ENCODE measurements at regions of chr11 and their contacts with region 1.

Region 1: DNA sequence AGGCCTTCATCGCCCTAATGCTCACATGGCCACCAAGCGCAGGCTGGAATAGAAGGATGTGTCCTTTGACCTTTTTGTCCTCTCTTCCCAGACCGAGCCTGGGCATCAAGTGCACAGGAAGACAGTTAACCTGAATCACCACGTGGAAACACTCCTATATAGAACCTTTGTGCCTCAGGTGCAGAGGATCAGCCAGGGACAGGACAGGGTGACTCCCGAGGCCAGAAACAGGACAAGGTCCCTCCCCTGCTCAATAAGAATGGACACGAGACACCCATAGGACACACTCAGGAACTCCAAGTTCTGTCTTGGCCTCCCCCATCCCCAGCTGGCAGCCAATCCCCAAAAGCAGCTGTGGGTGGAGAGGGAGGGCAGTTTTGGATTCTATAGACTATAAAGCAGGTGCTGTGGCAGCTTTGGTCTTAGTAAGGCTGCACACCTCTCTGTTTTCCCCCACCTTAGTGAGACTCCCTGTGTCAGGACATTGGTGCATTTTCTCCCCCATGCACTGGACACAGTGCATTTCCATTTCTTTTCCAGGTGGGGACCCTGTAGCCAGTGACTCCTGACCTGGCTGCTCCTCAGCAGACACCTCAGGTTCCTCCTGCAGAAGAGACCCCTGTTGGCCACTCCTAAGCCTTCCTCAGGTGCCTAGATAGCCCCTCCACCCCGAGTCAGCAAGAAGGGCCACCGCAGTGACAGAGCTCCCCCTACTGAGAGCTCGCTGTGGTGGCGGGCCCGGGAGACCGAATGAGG is 43.6 kb upstream of the POU2AF1 start:
- DNase-seq: peak; percentile 62
- H3K4me3 Mint-ChIP-seq: no peak overlapping the region
- H3K27ac Mint-ChIP-seq: no peak overlapping the region
- H3K4me1 Mint-ChIP-seq: peaks cover 10% of the 10 kb centered on the region
- H3K27me3 Mint-ChIP-seq: peaks cover 4% of the 10 kb centered on the region

Region 2: GRCh38 chr11:111283945-111284481 is 138.7 kb before region 1 on chr11:
- CTCF ChIA-PET with region 1: interaction called, 344 read pairs
- DNase-seq: no peak
- H3K4me3 Mint-ChIP-seq: no peak overlapping the region
- H3K27ac Mint-ChIP-seq: no peak overlapping the region
- H3K4me1 Mint-ChIP-seq: no peaks in the 10 kb centered on the region
- H3K27me3 Mint-ChIP-seq: no peaks in the 10 kb centered on the region

Region 3: GRCh38 chr11:111378861-111379601 is 43.6 kb before region 1 on chr11 and contains the start of gene POU2AF1:
- CTCF ChIA-PET with region 1: interaction called, 17 read pairs
- DNase-seq: peak; percentile 89
- H3K4me3 Mint-ChIP-seq: peak within 1 kb of the TSS; percentile 79
- H3K27ac Mint-ChIP-seq: peak within 1 kb of the TSS; percentile 95
- H3K4me1 Mint-ChIP-seq: peaks cover 39% of the 10 kb centered on the region
- H3K27me3 Mint-ChIP-seq: peaks cover 7% of the 10 kb centered on the region

Region 4: GRCh38 chr11:111409915-111410314 is 12.8 kb before region 1 on chr11:
- CTCF ChIA-PET with region 1: interaction called, 17 read pairs
- DNase-seq: no peak
- H3K4me3 Mint-ChIP-seq: no peak overlapping the region
- H3K27ac Mint-ChIP-seq: no peak overlapping the region
- H3K4me1 Mint-ChIP-seq: peaks cover 13% of the 10 kb centered on the region
- H3K27me3 Mint-ChIP-seq: peaks cover 14% of the 10 kb centered on the region

Region 5: GRCh38 chr11:111446404-111447111 is 23.9 kb after region 1 on chr11:
- CTCF ChIA-PET with region 1: interaction called, 68 read pairs
- DNase-seq: peak; percentile 88
- H3K4me3 Mint-ChIP-seq: no peak overlapping the region
- H3K27ac Mint-ChIP-seq: peak overlapping the region; percentile 76
- H3K4me1 Mint-ChIP-seq: peaks cover 18% of the 10 kb centered on the region
- H3K27me3 Mint-ChIP-seq: peaks cover 3% of the 10 kb centered on the region

Measured in activated naive CD4-positive, alpha-beta T cell treated with anti-CD3 and anti-CD28 coated beads, Interleukin-2, amount 10 ng/mL, durations not matched to agents 7 days and 5 days (primary cell).